ENCODE measurements at regions of chr3 and their contacts with region 1.

Region 1: DNA sequence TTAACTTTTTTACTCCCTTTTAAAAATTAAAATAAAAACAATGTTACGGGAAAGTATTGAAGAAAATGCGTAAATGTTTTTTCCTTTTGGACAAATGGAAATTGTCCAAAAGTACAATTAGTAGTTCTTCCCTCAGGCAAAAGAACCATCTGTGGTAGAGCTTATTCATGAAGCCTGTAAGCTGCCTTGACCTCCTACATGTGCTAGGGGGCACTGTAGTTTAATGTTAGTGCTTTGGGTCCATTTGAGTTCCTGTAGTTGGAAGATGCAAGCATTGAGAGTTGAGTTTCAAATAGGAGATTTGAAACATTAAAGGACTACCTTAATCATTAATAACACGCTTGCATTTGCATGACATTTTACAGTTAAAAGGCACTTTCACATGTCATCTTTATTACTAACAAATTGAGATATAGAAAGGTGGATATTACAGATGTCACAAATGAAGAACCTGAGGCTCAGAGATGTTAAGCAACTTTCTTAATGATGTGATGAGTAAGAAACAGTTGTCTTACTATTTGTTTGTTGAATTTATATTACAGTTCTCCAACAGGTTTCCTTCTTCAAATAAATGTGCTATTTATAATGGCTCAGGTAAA is 1.8 kb upstream of the ZNF385D start:
- DNase-seq: no peak
- ATAC-seq: peak; percentile 69

Region 2: DNA sequence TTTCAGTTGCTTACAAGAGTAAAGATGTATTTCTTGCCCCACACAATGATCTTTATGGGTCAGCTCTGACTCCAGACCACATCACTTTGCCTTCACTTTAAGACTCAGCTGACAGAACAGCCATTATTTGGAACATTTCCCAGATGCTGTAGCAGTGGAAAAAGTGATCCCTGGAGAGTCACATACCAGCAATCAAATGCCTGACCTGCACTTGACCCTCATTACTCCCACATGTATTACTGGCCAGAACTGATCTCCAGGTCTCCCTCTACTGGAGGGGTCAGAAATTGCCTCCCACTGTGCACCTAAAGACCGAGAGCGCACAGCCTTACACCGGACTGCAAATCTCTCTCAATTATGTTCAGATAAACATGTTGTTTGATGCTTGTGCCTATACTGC is 86.7 kb after region 1 on chr3:
- intact Hi-C with region 1: loop called (anchors 5 kb)
- DNase-seq: no peak
- ATAC-seq: peak; percentile 94

Region 3: DNA sequence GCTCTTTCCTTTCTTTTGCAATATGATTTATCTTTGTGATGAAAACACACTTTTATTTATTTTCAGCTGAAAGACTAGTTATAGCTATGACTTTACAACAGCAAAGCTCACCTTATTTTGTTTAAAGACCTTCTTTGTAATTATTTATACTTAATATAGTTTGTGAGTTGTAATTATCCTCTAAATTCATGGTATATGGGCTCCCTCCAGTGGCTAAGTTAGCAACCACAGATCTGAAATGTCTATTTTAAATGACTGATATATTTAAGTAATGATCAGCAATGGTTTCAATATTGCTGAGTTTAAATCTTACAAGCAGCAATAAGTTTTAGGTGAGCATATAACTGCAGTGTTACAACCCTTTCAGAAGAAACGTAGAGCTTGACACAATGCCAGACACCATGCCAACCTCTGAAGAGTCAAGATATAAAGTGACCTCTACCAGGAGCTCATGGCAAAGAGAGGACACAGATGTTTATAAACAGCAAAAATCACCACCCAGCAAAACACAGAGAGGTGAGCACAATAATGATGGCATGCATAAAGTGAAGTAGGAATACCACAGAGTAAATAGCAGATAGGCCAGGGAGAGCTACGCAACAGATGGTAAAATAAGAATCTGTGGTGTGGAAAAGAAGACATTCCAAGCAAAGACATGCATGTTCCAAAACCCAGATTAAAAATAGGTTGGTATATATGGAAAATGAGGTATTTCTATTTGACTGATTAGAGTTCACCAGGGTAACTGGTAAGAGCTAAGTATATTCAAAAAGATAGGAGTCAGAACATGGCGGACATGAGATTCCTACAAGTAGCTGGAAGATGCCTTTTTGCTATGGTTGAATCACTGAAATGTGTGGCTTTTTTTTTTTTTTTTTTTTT is 141.9 kb after region 1 on chr3:
- intact Hi-C with region 1: loop called (anchors 5 kb)
- DNase-seq: no peak
- ATAC-seq: peak; percentile 68

Region 4: GRCh38 chr3:22117751-22118346 is 365.0 kb after region 1 on chr3:
- intact Hi-C with region 1: loop called (anchors 10 kb)
- DNase-seq: no peak
- ATAC-seq: no peak

Measured in left ventricle myocardium superior (tissue), 1 donor.